ENCODE measurements at regions of chr4 and their contacts with region 1.

Region 1: DNA sequence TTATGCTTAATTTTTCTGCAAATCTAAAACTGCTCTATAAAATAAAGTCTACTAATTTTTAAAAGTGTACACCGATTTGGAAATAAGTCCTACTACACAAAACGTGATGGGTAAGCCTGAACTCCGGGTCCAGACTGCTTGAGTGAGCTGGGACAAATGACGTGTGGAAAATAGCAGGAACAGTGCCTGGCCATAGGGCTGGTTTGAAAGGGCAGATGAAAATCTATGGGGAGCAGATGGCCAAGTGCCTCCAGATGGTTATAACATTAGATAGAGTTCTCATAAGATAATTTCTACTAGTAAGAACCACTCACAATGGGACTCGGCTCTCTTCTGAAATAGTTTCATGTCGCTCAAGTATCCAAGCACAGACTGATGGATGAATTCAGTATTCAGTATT is 52.5 kb downstream of the F11 start:
- DNase-seq: no peak
- ATAC-seq: no peak
- H3K4me3 ChIP-seq: no peak overlapping the region
- H3K27ac ChIP-seq: no peak overlapping the region
- H3K4me1 ChIP-seq: no peaks in the 10 kb centered on the region
- H3K27me3 ChIP-seq: peaks cover 11% of the 10 kb centered on the region; the same call in 1 of the 2 replicates
- CTCF ChIP-seq: no peak

Region 2: GRCh38 chr4:185997296-185997695 is 321.2 kb before region 1 on chr4:
- CTCF ChIA-PET with region 1: no interaction called
- POLR2A ChIA-PET with region 1: no interaction called
- in situ Hi-C with region 1: no loop called
- intact Hi-C with region 1: no loop called
- DNase-seq: no peak
- ATAC-seq: no peak
- H3K4me3 ChIP-seq: no peak overlapping the region
- H3K27ac ChIP-seq: no peak overlapping the region
- H3K4me1 ChIP-seq: no peaks in the 10 kb centered on the region
- H3K27me3 ChIP-seq: no peaks in the 10 kb centered on the region
- CTCF ChIP-seq: no peak

Region 3: DNA sequence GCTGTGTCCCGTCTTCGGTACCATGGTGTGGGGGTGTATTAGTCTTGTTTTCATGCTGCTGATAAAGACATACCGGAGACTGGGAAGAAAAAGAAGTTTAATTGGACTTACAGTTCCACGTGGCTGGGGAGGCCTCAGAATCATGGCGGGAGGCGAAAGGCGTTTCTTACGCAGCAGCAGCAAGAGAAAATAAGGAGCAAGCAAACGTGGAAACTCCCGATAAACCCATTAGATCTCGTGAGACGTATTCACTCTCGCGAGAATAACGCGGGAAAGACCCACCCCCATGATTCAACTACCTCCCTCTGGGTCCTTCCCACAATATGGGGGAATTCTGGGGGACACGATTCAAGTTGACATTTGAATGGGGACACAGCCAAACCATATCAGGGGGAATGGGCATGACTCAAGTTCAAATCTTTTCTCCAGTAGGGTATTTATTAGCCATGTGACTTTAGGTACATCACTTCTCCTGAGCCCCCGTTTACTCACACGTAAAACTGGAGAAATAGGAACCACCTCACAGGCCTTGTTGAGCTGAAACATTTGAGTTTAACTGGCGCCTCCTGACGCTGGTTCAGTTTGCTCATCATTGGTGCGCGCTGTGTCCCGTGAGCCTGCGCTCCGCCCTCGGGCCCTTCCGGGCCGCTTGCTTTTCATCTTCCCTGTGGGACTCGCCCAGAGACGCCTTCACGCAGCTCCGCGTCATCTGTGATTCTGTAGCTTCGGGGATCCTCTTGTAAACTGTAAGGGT is 440.6 kb after region 1 on chr4:
- CTCF ChIA-PET with region 1: no interaction called
- POLR2A ChIA-PET with region 1: interaction called, 12 read pairs
- in situ Hi-C with region 1: no loop called
- intact Hi-C with region 1: no loop called
- DNase-seq: no peak
- ATAC-seq: no peak
- H3K4me3 ChIP-seq: no peak overlapping the region
- H3K27ac ChIP-seq: no peak overlapping the region
- H3K4me1 ChIP-seq: peaks cover 2% of the 10 kb centered on the region; the same call in 1 of the 2 replicates
- H3K27me3 ChIP-seq: no peaks in the 10 kb centered on the region
- CTCF ChIP-seq: no peak

Measured in Panc1 (cell line).